SK-N-SH (cell line): ENCODE measurements at regions of chr3 and their contacts with region 1.

Region 1: GRCh38 chr3:177050501-177051237 is 146.6 kb downstream of the TBL1XR1 start:
- DNase-seq: peak; percentile 28
- H3K4me3 ChIP-seq: no peak overlapping the region
- H3K27ac ChIP-seq: peak overlapping the region; percentile 23 to 62; a peak in 3 of 4 replicates
- H3K4me1 ChIP-seq: peaks cover 10 to 22% of the 10 kb centered on the region in 2 experiments; a peak in 3 of 4 replicates
- H3K27me3 ChIP-seq: no peaks in the 10 kb centered on the region
- CTCF ChIP-seq: peak; percentile 77
- EP300 ChIP-seq: no peak
- RAD21 ChIP-seq: peak; percentile 81

Region 2: GRCh38 chr3:177035676-177036075 is 15.0 kb before region 1 on chr3:
- CTCF ChIA-PET with region 1: interaction called, 14 read pairs
- POLR2A ChIA-PET with region 1: no interaction called
- DNase-seq: no peak
- H3K4me3 ChIP-seq: no peak overlapping the region
- H3K27ac ChIP-seq: no peak overlapping the region
- H3K4me1 ChIP-seq: no peaks in the 10 kb centered on the region; a peak in 1 of 4 replicates
- H3K27me3 ChIP-seq: no peaks in the 10 kb centered on the region
- CTCF ChIP-seq: no peak
- EP300 ChIP-seq: no peak
- RAD21 ChIP-seq: no peak

Region 3: DNA sequence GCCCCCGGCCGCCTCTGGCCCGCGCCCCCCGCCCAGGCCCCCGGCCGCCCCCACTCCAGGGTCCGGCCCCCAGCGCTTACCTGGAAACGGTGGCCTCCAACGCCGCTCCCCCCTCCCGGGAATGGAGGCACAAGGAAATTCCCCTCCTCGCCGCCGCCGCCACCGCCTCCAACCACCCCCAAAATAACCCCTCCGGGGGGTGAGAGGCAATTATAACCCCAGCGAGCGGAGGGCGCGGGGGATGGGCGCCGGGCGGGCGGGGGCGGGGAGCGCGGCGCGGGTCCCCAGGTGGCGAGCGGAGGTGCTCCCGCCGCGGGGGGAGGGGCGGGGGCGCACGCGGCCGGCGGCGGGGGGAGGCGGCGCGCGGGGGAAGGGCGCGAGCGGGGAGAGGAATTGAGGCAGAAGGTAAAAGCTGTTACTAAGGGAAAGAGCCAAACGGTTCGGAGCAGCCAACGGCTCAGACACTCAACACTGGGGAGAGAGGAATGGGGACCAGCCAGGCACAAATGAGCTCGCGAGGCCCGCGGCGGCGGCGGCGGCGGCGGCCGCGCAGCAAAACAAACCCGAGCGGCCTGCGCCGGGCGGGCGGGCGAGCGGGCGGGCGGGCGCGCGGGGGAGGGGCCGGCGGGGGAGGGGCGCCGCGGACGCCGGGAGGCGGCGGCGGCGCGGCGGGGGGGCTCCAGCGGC is 146.5 kb after region 1 on chr3 and contains the start of gene TBL1XR1:
- CTCF ChIA-PET with region 1: interaction called, 8 read pairs
- POLR2A ChIA-PET with region 1: interaction called, 13 read pairs
- DNase-seq: peak; percentile 93
- H3K4me3 ChIP-seq: peak within 1 kb of the TSS; percentile 85 to 99
- H3K27ac ChIP-seq: peak within 1 kb of the TSS; percentile 87 to 99
- H3K4me1 ChIP-seq: peaks cover 6 to 8% of the 10 kb centered on the region in 2 experiments; a peak in 3 of 4 replicates
- H3K27me3 ChIP-seq: no peaks in the 10 kb centered on the region
- CTCF ChIP-seq: no peak
- EP300 ChIP-seq: peak; percentile 40 to 89; a peak in 3 of 4 replicates
- RAD21 ChIP-seq: peak; percentile 50
- polyA plus RNA-seq, gene TBL1XR1: 16.7 and 20.9 TPM in 2 replicates

Region 4: DNA sequence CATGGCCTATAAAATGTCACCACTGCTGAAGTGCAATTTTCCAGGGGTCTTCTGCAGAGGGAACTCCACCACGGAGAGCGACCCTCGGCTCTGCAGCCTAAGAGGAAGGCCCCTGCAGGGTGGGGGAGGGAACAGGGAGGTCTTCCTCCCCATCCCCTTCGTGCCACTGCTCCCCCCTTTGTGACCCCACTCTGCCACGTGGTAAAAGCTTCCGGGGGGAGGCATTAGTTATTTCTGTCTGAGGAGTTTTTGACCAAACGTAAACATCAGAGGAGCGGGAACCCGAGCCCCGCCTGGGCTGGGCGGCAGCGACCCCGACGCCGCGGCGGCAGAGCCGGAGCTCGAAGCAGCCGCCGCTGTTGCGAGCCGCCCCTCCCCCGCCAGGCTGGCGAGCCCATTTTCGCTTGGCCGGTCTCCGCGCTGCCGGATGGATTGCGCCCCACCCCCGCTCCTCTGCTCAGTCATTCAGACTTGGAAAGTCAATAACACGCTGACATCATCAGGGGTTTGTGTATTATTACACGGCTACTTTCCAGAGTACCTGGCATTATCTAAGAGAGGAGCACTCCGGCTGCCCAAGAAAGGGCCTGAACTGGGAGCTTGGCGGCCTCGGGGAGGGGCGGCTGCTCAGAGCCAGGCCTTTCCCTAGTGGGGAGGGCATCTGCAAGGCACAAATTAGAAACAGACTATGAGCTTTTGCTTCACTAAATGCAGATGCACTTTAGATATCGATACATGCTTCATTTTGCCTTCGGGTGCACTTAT is 309.1 kb after region 1 on chr3:
- CTCF ChIA-PET with region 1: interaction called, 38 read pairs
- POLR2A ChIA-PET with region 1: interaction called, 8 read pairs
- DNase-seq: peak; percentile 92
- H3K4me3 ChIP-seq: peak overlapping the region; percentile 33 to 45
- H3K27ac ChIP-seq: peak overlapping the region; percentile 85 to 97
- H3K4me1 ChIP-seq: peaks cover 37 to 40% of the 10 kb centered on the region in 2 experiments
- H3K27me3 ChIP-seq: no peaks in the 10 kb centered on the region
- CTCF ChIP-seq: no peak
- EP300 ChIP-seq: peak; percentile 96 to 99
- RAD21 ChIP-seq: peak; percentile 71

Region 5: DNA sequence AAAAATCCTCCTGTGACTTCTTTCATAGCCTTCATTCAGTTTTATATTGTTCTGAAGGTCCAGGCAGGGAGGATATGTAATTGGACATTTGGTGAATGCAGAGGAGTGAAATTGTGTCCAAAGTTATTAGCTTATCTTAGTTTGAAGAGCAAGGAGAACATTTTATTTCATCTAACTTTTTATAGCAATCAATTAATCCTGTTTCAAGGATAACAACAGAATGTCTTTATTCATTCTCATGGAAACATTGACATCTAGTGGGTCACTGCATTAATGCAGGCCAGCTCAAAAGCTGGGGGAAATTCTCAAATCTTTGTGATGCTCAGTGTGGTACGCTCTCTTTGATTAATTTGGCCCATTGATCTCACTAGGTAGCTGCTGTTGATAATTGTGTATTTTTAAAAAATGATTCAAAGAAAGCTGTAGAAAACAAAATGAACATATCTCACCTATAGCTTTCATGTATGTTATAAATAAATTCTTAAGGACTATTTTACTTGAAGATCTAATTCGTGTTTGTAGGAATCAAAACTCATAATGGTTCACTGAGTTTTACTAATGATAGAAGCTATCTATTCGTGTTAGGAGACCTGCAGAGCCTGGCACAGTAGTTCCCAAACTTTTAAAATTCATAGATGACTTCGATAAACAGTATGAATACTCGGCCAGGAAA is 1334.7 kb after region 1 on chr3:
- CTCF ChIA-PET with region 1: interaction called, 10 read pairs
- POLR2A ChIA-PET with region 1: no interaction called
- DNase-seq: peak; percentile 52
- H3K4me3 ChIP-seq: no peak overlapping the region; a peak in 1 of 4 replicates
- H3K27ac ChIP-seq: peak overlapping the region; percentile 84 to 95
- H3K4me1 ChIP-seq: peaks cover 21 to 28% of the 10 kb centered on the region in 2 experiments
- H3K27me3 ChIP-seq: no peaks in the 10 kb centered on the region
- CTCF ChIP-seq: peak; percentile 95
- EP300 ChIP-seq: no peak
- RAD21 ChIP-seq: peak; percentile 97